Testis (tissue), 5 donors: ENCODE measurements at regions of chr11 and their contacts with region 1.

Region 1: DNA sequence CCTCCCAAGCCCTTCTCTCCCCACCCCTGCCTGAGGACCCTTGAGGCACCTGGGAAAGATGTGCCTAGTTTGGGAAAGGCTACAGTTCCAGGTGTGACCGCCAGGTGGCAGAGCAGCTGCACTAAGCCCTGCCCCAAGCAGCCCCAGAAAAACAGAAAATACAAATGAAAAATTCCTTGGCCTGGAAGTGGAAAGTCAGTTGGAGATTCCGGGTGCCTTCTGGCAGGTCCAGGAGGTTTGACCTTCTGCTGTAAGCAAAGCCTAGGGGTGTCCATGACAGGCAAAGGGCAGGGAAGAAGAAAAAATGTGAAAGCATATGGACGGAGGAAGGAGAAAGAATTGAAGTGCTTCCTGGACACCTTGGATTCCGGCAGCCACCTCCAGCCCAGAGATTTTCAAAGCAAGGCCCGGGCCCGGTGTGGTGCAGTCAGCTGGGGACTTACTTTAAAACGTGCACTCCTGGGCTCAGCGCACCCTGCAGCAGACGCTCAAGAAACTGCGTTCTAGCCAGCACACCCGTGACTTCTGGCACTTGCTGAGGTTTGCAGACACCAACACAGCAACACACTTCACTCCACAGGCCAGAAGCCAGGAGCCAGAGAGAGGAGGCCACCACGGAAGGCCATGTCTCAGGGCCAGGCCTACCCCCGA is 37.3 kb upstream of the SLC22A12 start:
- DNase-seq: peak; percentile 83
- H3K4me3 ChIP-seq: no peak overlapping the region
- H3K27ac ChIP-seq: peak overlapping the region; percentile 81 to 86
- H3K4me1 ChIP-seq: peaks cover 33% of the 10 kb centered on the region
- H3K27me3 ChIP-seq: no peaks in the 10 kb centered on the region
- CTCF ChIP-seq: peak; percentile 98 to 99 (median 99)
- POLR2A ChIP-seq: no peak

Region 2: GRCh38 chr11:64359712-64360445 is 193.8 kb before region 1 on chr11:
- intact Hi-C with region 1: no loop called
- DNase-seq: no peak
- H3K4me3 ChIP-seq: peak overlapping the region; percentile 66 to 69
- H3K27ac ChIP-seq: no peak overlapping the region
- H3K4me1 ChIP-seq: peaks cover 32% of the 10 kb centered on the region
- H3K27me3 ChIP-seq: no peaks in the 10 kb centered on the region
- CTCF ChIP-seq: no peak
- POLR2A ChIP-seq: no peak

Region 3: GRCh38 chr11:64619811-64620380 is 66.2 kb after region 1 on chr11:
- intact Hi-C with region 1: no loop called
- DNase-seq: peak; percentile 89
- H3K4me3 ChIP-seq: no peak overlapping the region
- H3K27ac ChIP-seq: peak overlapping the region; percentile 40 to 84
- H3K4me1 ChIP-seq: peaks cover 42% of the 10 kb centered on the region
- H3K27me3 ChIP-seq: no peaks in the 10 kb centered on the region
- CTCF ChIP-seq: no peak
- POLR2A ChIP-seq: no peak

Region 4: DNA sequence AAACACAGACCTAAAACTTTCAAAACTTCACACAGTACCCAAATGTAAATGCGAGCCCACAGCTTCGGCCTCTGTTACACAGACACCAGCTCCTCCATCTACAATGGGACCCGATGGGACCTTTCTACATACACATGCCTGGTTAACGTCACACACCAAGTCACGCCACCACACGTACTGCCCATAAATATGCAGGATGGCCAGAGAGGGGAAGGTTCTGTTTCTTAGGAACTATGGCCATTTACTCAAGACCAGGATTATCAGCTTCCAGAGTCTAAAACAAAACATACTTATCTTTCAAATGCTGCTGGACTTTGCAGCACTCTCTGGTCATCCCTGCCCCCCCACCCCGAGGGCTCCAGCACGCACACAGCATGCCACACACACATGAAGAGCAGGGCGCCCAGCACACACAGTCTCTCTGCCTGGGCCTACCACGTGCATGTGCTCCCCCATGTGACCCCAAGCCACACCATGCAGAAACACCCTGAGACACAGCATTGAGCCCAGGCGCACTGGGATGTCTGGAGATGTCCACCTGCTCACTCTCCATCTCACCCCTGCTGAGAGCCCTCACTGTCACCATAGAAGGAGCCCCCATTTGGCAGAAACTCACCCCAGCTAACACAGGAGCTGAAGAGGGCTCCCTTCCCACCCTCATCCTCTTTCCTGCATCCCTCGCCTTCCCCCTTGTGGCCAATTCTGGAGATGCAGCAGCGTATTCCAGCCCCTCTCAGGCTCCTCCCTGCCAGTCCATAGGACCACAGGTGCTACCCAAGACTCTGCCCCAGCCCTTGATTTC is 99.1 kb after region 1 on chr11:
- intact Hi-C with region 1: loop called (anchors 5 kb)
- DNase-seq: peak; percentile 86
- H3K4me3 ChIP-seq: no peak overlapping the region
- H3K27ac ChIP-seq: no peak overlapping the region
- H3K4me1 ChIP-seq: peaks cover 5% of the 10 kb centered on the region
- H3K27me3 ChIP-seq: no peaks in the 10 kb centered on the region
- CTCF ChIP-seq: peak; percentile 88 to 93 (median 91)
- POLR2A ChIP-seq: no peak